ENCODE measurements at regions of chr19 and their contacts with region 1.

Region 1: DNA sequence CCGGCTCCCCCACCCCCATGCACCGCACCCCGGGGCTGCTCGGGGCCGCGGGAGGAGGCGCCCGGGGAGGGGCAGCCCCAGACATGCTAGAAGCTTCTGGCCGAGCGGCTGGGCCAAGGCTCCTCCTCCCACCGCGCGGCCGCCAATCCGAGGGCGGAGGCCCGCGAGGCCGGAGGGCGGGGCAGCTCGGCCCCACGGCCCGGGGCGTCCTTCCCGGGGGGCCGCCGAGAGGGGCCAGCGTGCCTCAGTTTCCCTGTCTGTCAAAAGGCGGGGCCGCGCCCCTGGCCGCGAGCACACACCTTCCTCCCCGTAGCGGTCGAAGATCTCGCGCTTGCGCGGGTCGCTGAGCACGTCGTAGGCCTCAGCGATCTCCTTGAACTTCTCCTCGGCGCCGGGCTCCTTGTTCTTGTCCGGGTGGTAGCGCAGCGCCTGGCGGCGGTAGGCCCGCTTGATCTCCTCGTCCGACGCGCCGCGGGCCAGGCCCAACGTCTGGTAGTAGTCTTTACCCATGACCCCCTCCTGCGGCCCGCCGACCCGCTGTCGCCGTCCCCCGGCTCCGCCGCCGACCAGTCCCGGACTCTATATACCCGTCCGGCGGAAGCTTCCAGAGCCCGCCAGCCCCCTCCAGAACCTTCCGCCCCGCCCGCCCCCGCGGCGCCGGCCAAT is at the start of gene DNAJB1:
- DNase-seq: peak; percentile 71 to 76
- ATAC-seq: peak; percentile 40 to 72 (median 58)
- H3K4me3 ChIP-seq: peak within 1 kb of the TSS; percentile 99
- H3K4me3 Mint-ChIP-seq: peak within 1 kb of the TSS; percentile 95
- H3K27ac ChIP-seq: peak within 1 kb of the TSS; percentile 99
- H3K27ac Mint-ChIP-seq: peak within 1 kb of the TSS; percentile 91 to 96
- H3K4me1 ChIP-seq: peaks cover 62% of the 10 kb centered on the region
- H3K4me1 Mint-ChIP-seq: peaks cover 41 to 61% of the 10 kb centered on the region in 2 donors
- H3K27me3 ChIP-seq: no peaks in the 10 kb centered on the region
- H3K27me3 Mint-ChIP-seq: no peaks in the 10 kb centered on the region
- CTCF ChIP-seq: no peak
- total RNA-seq, gene DNAJB1: 148 to 238 (median 192) TPM

Region 2: GRCh38 chr19:14031719-14032480 is 486.1 kb before region 1 on chr19 and contains the start of gene IL27RA:
- intact Hi-C with region 1: no loop called
- DNase-seq: peak; percentile 77 to 90
- ATAC-seq: peak; percentile 79 to 90 (median 80)
- H3K4me3 ChIP-seq: peak within 1 kb of the TSS; percentile 96
- H3K4me3 Mint-ChIP-seq: peak within 1 kb of the TSS; percentile 95
- H3K27ac ChIP-seq: peak within 1 kb of the TSS; percentile 99
- H3K27ac Mint-ChIP-seq: peak within 1 kb of the TSS; percentile 92 to 93
- H3K4me1 ChIP-seq: peaks cover 40% of the 10 kb centered on the region
- H3K4me1 Mint-ChIP-seq: peaks cover 23 to 51% of the 10 kb centered on the region in 2 donors
- H3K27me3 ChIP-seq: no peaks in the 10 kb centered on the region
- H3K27me3 Mint-ChIP-seq: no peaks in the 10 kb centered on the region
- CTCF ChIP-seq: peak; percentile 54
- total RNA-seq, gene IL27RA: 38.4 to 61.1 (median 58.0) TPM

Region 3: DNA sequence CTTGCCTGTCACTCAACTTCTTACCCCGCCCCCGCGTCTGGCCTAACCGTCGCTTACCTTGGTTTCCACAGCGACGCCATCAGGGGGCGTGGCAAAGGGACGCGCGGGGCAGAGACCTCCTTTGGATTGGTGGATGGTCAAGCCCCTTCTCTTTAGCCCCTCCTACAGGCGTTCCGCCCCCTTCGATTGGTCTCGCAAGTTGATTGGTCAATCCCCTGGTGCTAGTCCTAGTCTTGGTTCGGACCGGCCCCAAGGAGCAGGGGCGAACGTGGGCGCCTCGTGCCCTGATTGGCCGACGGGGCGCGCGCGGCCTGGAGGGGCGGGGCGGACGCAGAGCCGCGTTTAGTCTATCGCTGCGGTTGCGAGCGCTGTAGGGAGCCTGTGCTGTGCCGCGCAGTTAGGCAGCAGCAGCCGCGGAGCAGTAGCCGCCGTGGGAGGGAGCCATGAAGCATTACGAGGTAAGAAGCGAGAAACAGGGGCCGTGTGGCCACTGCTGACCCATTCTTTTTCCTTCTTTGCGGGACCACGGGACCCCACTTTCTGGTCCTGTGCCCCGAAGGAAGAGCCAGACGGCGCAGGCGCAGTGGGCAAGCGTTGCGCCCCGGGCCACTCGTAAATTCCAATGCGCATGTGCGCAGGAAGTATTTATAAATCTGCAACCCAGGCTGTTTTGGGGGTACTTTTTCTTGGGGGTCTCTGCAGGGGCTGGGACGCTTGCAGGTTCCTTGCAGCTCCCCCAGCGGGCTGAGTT is 11.5 kb after region 1 on chr19 and contains the start of gene TECR:
- intact Hi-C with region 1: loop called (anchors 1 kb)
- DNase-seq: peak; percentile 99 to 100
- ATAC-seq: peak; percentile 93 to 99 (median 94)
- H3K4me3 ChIP-seq: peak within 1 kb of the TSS; percentile 64
- H3K4me3 Mint-ChIP-seq: peak within 1 kb of the TSS; percentile 96
- H3K27ac ChIP-seq: peak within 1 kb of the TSS; percentile 86
- H3K27ac Mint-ChIP-seq: peak within 1 kb of the TSS; percentile 95 to 97
- H3K4me1 ChIP-seq: peaks cover 20% of the 10 kb centered on the region
- H3K4me1 Mint-ChIP-seq: peaks cover 9 to 12% of the 10 kb centered on the region in 2 donors
- H3K27me3 ChIP-seq: no peaks in the 10 kb centered on the region
- H3K27me3 Mint-ChIP-seq: no peaks in the 10 kb centered on the region
- CTCF ChIP-seq: no peak
- total RNA-seq, gene TECR: 123 to 158 (median 131) TPM

Region 4: DNA sequence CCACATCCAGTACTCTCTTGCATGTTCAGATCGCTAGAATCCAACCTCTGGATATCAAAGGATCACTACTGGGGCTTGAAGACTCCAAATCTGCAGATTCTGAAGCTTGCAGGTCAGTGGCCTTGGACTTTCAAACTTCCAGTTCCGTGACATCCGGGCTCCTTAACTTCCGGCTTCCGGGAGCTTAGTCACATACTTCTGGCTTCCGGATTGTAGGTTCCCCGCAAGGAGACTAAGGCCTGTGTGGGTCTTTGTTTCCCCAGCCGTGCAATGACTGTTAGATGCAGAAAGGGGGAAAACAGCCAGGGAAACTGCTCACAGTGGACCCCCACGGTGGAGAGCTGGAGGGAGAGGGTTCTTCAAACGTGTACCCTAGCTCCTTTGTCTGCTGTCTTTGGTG is 213.2 kb after region 1 on chr19:
- intact Hi-C with region 1: no loop called
- DNase-seq: no peak
- ATAC-seq: no peak
- H3K4me3 ChIP-seq: no peak overlapping the region
- H3K4me3 Mint-ChIP-seq: no peak overlapping the region
- H3K27ac ChIP-seq: no peak overlapping the region
- H3K27ac Mint-ChIP-seq: no peak overlapping the region
- H3K4me1 ChIP-seq: no peaks in the 10 kb centered on the region
- H3K4me1 Mint-ChIP-seq: no peaks in the 10 kb centered on the region
- H3K27me3 ChIP-seq: no peaks in the 10 kb centered on the region
- H3K27me3 Mint-ChIP-seq: peaks cover 0 to 3% of the 10 kb centered on the region in 2 donors
- CTCF ChIP-seq: no peak

Measured in natural killer cell (primary cell).